Activated T-helper 1 cell treated with anti-CD3 and anti-CD28 coated beads, Interleukin-12 subunit alpha, Interleukin-12 subunit beta, Interleukin-2, Interleukin-4 antibody, amounts not matched to agents 30 ng/mL and 10 ng/mL and 1 ng/mL, durations not matched to agents 14 hours and 24 hours and 36 hours (primary cell): ENCODE measurements at regions of chr7 and their contacts with region 1.

Region 1: DNA sequence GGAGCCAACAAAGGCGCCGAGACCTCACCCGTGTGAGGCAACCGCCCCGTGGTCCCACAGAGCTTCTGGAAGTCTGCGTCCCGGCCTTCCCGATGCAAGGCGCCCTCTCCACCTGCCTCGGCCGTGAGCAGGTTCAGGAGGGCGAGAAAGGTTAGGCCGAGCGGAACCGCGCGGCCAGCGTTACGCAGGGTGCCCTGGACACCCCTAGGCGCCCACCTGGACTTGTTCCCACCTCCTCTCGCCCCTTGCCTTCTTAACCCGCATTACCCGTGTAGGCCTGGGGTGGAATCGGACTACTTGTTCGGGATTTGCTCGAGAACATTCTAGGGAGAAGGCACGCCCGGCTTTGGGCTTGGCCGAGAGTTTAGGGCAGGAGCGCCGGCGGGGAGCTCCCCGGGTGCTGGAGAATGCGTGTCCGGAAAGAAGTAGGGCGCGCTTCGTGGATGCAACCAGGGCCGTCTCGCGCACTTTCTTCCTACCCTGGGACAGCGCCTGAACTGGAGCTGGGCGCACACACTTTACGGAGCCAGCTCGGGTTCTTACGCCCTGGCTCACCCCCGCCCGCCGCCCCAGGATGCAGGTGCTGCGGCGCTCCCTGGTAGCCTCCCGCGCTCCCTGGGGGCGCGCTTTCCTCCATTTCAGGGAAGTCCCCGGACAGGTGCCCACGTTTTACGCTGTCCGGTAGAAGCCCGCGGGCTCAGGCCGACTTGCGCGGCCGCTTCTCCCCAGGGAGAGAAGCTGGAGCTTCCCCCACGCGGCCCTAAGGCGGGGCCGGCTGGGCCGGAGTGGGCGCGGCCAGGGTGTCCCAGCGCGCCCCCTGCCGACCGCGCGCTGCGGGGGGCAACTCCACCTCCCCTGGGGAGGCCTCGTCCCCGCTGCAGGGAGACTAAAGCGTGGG is 74.5 kb downstream of the INSIG1 start:
- DNase-seq: no peak
- H3K4me3 Mint-ChIP-seq: no peak overlapping the region
- H3K27ac Mint-ChIP-seq: peak overlapping the region; percentile 71
- H3K4me1 Mint-ChIP-seq: peaks cover 24% of the 10 kb centered on the region
- H3K27me3 Mint-ChIP-seq: peaks cover 66% of the 10 kb centered on the region

Region 2: GRCh38 chr7:155344600-155345433 is 27.3 kb before region 1 on chr7:
- intact Hi-C with region 1: no loop called
- DNase-seq: peak; percentile 73
- H3K4me3 Mint-ChIP-seq: peak overlapping the region; percentile 35
- H3K27ac Mint-ChIP-seq: no peak overlapping the region
- H3K4me1 Mint-ChIP-seq: peaks cover 7% of the 10 kb centered on the region
- H3K27me3 Mint-ChIP-seq: peaks cover 15% of the 10 kb centered on the region

Region 3: DNA sequence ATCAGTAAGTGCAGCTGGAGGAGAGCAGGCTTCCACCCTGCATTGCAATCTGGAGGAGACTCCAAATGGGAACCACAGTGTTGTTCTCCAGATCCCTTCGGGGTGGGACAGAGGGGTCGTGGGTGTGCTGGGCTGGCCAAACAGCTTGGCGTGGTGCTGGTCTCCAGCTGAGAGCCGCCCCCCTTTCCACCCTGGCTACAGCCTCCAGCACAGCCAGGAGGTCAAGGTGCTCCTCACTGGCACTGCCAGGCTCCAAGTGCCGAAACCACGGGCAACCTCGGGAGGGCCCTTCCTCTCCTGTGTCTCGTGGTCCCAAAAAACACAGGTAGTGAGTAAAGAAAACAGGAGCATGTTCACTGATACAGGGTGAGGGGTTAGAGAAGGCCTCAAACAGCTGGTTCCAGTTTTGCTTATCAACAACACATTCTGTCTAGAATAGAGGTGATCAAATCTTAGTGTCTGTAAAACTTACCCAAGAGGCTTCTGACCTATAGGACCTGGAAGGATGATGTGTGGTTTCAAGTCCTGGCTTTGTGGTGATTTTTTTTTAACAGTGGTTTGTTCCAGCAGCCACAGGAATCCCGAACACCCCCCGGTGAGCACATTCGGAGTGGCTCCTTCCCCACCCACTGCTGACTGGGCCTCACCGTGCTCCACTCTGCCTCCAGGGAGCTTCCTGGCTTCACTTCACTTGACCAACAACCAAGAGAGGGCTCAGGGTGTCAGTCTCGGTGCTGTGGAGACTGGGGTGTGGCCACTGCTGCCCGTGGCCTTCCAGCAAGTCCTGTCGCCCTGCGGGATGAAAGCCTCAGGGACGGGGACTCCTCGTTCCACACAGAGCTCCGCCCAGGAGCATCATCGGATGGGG is 54.6 kb after region 1 on chr7:
- intact Hi-C with region 1: no loop called
- DNase-seq: no peak
- H3K4me3 Mint-ChIP-seq: no peak overlapping the region
- H3K27ac Mint-ChIP-seq: no peak overlapping the region
- H3K4me1 Mint-ChIP-seq: no peaks in the 10 kb centered on the region
- H3K27me3 Mint-ChIP-seq: peaks cover 12% of the 10 kb centered on the region

Region 4: DNA sequence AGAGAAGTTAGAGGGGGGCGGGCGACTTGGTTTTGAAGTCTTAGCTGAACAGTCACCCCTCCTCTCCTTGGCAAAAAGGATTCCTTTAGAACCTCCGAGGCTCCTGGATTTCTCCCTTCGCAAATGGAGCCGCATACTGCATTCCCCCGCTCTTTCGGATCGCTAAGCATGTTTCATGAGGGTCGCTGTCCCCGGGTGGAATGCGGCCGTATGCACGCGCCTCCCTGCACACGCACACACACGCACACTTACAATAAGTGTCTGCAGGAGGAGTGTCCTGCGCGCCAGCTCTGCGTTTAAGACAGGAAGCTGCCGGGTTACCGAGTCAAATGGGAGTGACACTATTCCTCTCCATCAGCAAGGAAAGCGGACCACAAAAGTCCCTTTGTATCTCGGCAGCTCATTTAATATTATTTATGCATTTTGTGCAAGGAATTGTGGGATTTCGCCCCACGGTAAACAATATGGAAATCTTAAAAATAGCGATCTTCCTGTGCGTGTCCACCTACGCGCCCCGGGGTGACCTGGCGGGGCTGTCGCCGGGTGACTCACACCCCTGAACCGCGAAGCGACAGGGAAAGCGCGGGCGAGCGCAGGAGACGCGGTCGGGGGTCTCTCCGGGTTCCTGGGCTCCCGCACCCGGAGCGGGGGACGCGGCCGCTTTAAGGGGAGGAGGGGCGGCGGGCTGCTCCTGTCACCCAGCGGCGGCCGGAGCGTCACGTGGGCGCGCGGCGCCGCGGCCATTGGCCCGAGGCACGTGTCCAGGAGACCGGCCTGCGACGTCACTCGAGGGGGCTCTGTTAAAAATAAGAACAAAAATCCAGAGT is 84.8 kb after region 1 on chr7:
- intact Hi-C with region 1: loop called (anchors 2 kb)
- DNase-seq: no peak
- H3K4me3 Mint-ChIP-seq: peak overlapping the region; percentile 5
- H3K27ac Mint-ChIP-seq: peak overlapping the region; percentile 70
- H3K4me1 Mint-ChIP-seq: peaks cover 4% of the 10 kb centered on the region
- H3K27me3 Mint-ChIP-seq: peaks cover 68% of the 10 kb centered on the region

Region 5: DNA sequence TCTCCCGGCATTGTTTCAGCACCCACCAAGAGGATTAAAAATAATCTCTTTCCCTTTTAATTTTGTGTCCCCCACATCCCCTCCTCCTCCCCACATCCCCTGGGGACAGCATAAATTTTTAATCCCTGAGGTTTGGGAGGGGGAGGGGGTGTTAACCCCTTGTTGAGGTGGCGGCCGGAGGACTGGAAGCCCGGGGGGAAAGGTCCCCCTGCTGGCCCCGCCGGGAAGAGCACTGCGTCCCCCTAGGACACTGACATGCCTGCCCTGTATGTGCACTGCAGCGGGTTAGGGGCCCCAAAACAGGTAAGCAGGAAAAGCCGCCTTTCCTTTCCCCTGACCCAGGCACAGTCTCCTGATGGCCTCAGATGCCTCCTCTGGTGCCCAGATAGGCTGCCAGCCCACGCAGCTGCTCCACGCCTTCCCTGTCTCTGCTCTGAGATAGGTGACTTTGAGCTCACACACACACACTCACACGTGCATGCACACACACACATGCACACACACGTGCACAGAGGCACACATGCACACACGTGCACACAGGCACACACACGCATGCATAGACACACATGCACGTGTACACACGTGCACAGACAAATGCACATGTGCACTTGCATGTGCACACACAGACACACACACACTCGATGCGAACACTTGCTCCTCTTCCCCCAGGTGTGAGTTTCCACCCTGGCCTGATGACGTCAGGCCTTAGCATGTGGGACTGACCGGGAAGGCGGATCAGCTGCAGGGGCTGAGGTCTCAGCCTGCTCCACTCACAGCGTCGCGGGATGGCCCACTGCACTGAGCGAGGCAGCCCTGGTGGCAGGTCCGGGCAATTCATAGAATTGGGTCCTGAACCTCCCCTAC is 161.9 kb after region 1 on chr7:
- intact Hi-C with region 1: loop called (anchors 2 kb)
- DNase-seq: no peak
- H3K4me3 Mint-ChIP-seq: no peak overlapping the region
- H3K27ac Mint-ChIP-seq: no peak overlapping the region
- H3K4me1 Mint-ChIP-seq: peaks cover 11% of the 10 kb centered on the region
- H3K27me3 Mint-ChIP-seq: peaks cover 61% of the 10 kb centered on the region

Region 6: DNA sequence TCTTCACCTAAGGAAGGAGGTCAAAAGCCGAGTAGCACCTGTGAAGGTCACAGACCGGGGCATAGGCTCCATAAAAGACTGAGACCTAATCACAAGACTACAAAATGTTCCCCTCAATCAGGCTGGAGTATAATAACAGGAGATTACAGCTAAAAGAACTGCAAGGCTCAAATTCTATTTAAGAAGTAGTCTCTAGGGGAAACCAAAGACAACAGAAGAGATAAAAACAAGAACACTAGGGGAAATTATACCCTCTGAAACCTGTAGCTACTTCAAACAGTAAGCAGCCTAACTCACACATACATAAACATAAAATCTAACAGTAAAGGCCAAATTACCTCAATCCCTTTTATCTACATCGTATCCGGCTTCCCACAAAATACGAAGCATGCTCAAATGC is 1482.5 kb after region 1 on chr7:
- intact Hi-C with region 1: loop called (anchors 10 kb)
- DNase-seq: no peak
- H3K4me3 Mint-ChIP-seq: no peak overlapping the region
- H3K27ac Mint-ChIP-seq: no peak overlapping the region
- H3K4me1 Mint-ChIP-seq: peaks cover 5% of the 10 kb centered on the region
- H3K27me3 Mint-ChIP-seq: no peaks in the 10 kb centered on the region